Activated CD4-positive, alpha-beta T cell treated with anti-CD3 and anti-CD28 coated beads, Interleukin-2, amount 10 ng/mL, durations not matched to agents 7 days and 5 days (primary cell): ENCODE measurements at regions of chr16 and their contacts with region 1.

Region 1: DNA sequence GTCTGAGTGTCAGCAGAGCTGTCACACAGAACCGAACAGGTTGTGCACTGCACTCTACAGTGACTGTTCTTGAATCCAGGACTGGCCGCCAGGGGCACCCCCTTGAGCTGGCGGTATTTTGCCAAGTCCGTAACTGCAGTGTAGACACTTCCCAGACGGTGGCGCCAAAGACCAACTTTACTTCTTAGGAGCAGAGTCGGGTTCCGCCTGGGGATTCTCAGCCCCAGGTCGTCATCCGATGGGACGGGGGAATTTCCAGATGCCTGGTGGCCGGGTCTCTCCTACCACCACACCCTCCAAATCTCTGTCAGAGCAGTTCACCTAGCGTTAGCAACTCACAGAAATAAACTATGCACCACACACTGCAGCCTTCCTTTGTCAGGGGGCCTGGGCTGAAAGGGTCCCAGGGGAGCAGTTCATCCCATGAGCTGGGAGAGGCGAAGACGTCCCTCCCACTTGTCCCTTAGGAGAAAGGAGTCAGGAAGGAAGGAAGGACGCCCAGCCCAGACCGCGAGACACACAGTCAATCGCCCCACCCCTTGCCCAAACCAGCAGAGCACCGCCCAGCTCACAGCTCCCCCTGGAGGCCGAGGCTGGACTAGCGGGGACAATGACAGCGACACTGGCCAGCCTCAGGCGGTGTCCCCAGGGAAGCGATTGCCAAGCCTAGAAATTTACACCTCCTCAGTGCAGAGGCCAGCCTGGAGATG is 7.4 kb upstream of the RIPOR1 start:
- DNase-seq: peak; percentile 98
- H3K4me3 Mint-ChIP-seq: peak overlapping the region; percentile 75
- H3K27ac Mint-ChIP-seq: peak overlapping the region; percentile 93
- H3K4me1 Mint-ChIP-seq: peaks cover 45% of the 10 kb centered on the region
- H3K27me3 Mint-ChIP-seq: peaks cover 22% of the 10 kb centered on the region

Region 2: DNA sequence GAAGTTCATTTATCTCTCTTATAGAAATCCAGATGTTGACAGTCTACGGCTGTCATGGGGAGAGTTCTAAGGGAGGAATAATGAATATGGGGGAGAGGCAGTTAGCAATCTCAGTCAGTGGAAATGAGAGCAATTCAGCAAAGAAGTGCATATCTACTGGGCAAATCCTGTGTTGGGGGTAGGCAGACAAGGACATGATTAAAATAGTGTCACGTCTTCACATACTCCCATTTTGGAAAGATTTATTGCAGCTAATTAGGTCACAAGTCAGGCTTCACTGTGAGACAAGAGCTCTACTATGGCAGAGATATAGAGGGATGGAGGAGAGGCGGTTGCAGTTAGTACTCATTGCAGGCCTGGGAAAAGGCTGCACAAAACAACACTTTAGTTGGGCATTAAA is 164.9 kb before region 1 on chr16:
- CTCF ChIA-PET with region 1: no interaction called
- POLR2A ChIA-PET with region 1: no interaction called
- DNase-seq: no peak
- H3K4me3 Mint-ChIP-seq: no peak overlapping the region
- H3K27ac Mint-ChIP-seq: no peak overlapping the region
- H3K4me1 Mint-ChIP-seq: no peaks in the 10 kb centered on the region
- H3K27me3 Mint-ChIP-seq: peaks cover 10% of the 10 kb centered on the region

Region 3: DNA sequence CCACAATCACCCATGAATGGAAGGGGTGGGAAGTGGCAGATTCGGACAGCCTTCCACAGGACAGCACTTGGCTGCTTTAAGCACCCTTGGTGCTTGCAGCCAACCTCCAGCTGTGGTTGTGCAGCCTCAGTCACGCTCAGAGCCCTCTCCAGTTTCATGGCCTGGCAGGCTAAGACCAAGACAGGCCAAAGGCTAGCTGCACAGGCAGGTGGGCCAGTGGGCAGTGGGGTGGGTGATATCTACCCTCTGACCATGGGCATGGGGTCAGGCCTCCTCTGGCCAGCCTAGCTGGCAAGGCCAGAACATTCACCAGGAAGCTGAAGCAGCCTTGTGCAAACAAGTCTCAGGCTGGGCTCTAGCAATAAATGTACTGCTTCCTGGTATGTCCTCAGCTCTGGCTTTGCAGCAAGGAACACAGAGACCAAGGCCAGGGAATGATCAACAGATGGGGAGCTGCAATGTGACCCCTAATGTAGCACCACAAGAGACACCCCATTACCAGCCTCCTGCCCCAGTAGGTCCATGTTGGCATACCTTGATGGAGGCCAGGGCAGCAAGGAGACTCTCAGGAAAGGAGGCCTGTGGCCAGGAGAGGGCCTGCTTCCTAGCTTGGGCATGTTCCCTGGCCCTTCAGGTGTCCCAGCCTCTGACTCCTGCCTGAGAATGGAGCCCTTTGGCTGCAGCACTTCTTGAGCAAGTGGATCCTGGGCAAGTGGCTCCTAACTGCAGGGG is 69.4 kb before region 1 on chr16:
- CTCF ChIA-PET with region 1: no interaction called
- POLR2A ChIA-PET with region 1: no interaction called
- DNase-seq: no peak
- H3K4me3 Mint-ChIP-seq: no peak overlapping the region
- H3K27ac Mint-ChIP-seq: no peak overlapping the region
- H3K4me1 Mint-ChIP-seq: peaks cover 20% of the 10 kb centered on the region
- H3K27me3 Mint-ChIP-seq: no peaks in the 10 kb centered on the region

Region 4: GRCh38 chr16:67480833-67481560 is 40.3 kb before region 1 on chr16 and contains the start of gene ATP6V0D1:
- CTCF ChIA-PET with region 1: interaction called, 195 read pairs
- POLR2A ChIA-PET with region 1: no interaction called
- DNase-seq: peak; percentile 99
- H3K4me3 Mint-ChIP-seq: peak within 1 kb of the TSS; percentile 90
- H3K27ac Mint-ChIP-seq: peak within 1 kb of the TSS; percentile 97
- H3K4me1 Mint-ChIP-seq: peaks cover 26% of the 10 kb centered on the region
- H3K27me3 Mint-ChIP-seq: no peaks in the 10 kb centered on the region
- total RNA-seq, gene ATP6V0D1: 52.1 to 60.3 TPM

Region 5: DNA sequence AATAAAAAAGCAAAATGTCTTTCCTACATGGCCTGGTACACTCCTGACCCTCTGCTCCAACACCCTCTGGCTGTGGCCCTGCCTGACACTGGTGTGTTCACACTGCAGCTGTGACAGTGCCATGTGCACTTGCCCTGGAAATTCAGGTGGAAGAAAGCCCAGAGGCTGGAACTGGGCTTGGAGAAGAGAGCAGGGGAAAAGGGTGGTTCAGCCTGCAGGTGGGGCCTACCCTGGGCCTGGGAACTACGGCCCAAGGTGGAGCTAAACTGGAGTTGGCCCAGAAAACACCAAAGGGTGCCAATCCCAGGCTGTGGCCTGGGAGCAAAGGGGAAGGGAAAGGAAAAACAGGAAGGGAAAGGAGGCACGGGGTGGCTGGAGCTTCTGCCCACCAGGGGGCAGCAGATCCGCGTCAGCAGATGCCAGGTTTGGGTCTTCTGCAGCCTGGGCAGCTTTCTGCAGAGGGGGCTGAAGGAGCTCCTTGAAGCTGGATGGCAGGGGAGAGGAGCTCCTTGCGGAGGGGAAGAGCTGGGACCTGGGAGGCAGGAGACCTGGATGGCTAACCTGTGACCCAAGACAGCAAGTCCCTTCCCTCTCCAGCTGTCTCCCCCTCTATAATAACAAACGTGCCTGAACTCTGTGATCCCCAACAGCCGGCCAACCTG is 25.6 kb after region 1 on chr16:
- CTCF ChIA-PET with region 1: interaction called, 52 read pairs
- POLR2A ChIA-PET with region 1: interaction called, 4 read pairs
- DNase-seq: peak; percentile 78
- H3K4me3 Mint-ChIP-seq: peak overlapping the region; percentile 55
- H3K27ac Mint-ChIP-seq: peak overlapping the region; percentile 97
- H3K4me1 Mint-ChIP-seq: peaks cover 66% of the 10 kb centered on the region
- H3K27me3 Mint-ChIP-seq: no peaks in the 10 kb centered on the region

Region 6: GRCh38 chr16:67561824-67562525 is 40.7 kb after region 1 on chr16:
- CTCF ChIA-PET with region 1: interaction called, 57 read pairs
- POLR2A ChIA-PET with region 1: interaction called, 3 read pairs
- DNase-seq: peak; percentile 99
- H3K4me3 Mint-ChIP-seq: peak overlapping the region; percentile 87
- H3K27ac Mint-ChIP-seq: peak overlapping the region; percentile 97
- H3K4me1 Mint-ChIP-seq: peaks cover 47% of the 10 kb centered on the region
- H3K27me3 Mint-ChIP-seq: no peaks in the 10 kb centered on the region

Region 7: DNA sequence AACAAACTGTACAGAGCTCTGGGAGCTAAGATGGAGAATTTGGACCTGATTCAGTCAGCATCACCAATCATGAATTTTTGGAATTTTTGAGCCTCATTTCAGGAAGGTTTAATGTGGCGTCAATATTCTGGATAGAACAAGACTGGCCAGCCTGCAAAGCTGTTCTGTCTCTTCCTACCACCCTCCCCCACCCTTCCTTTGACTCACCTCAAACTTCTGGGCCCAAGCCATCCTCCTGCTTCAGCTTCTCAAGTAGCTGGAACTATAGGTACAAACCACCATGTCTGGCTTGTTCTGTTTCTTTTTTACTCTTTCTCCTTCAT is 73.7 kb after region 1 on chr16:
- CTCF ChIA-PET with region 1: interaction called, 13 read pairs
- POLR2A ChIA-PET with region 1: no interaction called
- DNase-seq: no peak
- H3K4me3 Mint-ChIP-seq: no peak overlapping the region
- H3K27ac Mint-ChIP-seq: no peak overlapping the region
- H3K4me1 Mint-ChIP-seq: peaks cover 37% of the 10 kb centered on the region
- H3K27me3 Mint-ChIP-seq: no peaks in the 10 kb centered on the region

Region 8: DNA sequence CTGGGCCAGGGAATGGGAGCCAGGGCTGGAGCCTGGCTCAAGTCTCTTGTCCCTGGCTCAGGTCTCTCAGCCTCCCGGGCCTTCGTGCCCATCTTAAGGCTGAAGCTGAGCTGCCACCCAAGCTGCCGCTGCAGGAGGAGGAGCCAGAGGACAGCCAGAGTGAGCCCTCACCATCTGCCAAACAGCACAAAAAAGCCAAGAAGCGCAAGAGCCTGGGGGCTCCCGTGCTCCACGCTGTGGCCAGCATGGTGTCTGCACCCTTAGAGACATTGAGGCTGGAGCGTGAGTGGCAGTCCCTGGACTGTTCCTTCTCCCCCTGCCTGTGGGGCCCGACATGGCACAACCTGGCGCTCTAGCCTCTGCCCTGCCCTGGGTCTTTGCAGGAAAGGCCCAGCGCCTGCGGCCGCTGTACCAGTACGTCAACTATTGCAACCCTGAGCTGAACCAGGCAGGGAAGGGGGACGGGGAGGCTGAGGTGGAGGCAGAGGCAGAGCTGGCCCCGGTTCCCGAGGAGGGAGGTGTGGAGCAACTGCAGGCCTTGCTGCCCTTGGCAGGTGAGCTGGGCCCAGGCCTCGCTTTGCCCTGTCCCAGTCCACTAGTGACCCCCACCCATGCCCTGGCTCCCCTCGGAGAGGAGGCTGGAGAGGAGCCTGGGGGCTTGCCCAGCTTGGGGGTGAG is 146.7 kb after region 1 on chr16:
- CTCF ChIA-PET with region 1: interaction called, 177 read pairs
- POLR2A ChIA-PET with region 1: no interaction called
- DNase-seq: peak; percentile 89
- H3K4me3 Mint-ChIP-seq: peak overlapping the region; percentile 84
- H3K27ac Mint-ChIP-seq: peak overlapping the region; percentile 41
- H3K4me1 Mint-ChIP-seq: peaks cover 37% of the 10 kb centered on the region
- H3K27me3 Mint-ChIP-seq: no peaks in the 10 kb centered on the region

Region 9: GRCh38 chr16:67833418-67834241 is 312.4 kb after region 1 on chr16:
- CTCF ChIA-PET with region 1: interaction called, 10 read pairs
- POLR2A ChIA-PET with region 1: no interaction called
- DNase-seq: peak; percentile 96
- H3K4me3 Mint-ChIP-seq: peak overlapping the region; percentile 80
- H3K27ac Mint-ChIP-seq: peak overlapping the region; percentile 79
- H3K4me1 Mint-ChIP-seq: peaks cover 15% of the 10 kb centered on the region
- H3K27me3 Mint-ChIP-seq: no peaks in the 10 kb centered on the region